Left colon (tissue), 2 donors: ENCODE measurements at regions of chr12 and their contacts with region 1.

Region 1: GRCh38 chr12:6779708-6780432 is 7.5 kb downstream of the LAG3 start:
- DNase-seq: no peak
- ATAC-seq: peak; percentile 50

Region 2: GRCh38 chr12:5442251-5443006 is 1337.4 kb before region 1 on chr12:
- intact Hi-C with region 1: no loop called
- DNase-seq: no peak
- ATAC-seq: peak; percentile 83

Region 3: GRCh38 chr12:6745741-6746525 is 33.9 kb before region 1 on chr12:
- intact Hi-C with region 1: loop called in 1 of 2 experiments (anchors 5 kb)
- DNase-seq: no peak
- ATAC-seq: peak; percentile 25